Right ventricle myocardium inferior (tissue), 1 donor: ENCODE measurements at regions of chr22 and their contacts with region 1.

Region 1: GRCh38 chr22:49701380-49702067 is 126.1 kb downstream of the BRD1 start:
- DNase-seq: no peak
- ATAC-seq: no peak

Region 2: DNA sequence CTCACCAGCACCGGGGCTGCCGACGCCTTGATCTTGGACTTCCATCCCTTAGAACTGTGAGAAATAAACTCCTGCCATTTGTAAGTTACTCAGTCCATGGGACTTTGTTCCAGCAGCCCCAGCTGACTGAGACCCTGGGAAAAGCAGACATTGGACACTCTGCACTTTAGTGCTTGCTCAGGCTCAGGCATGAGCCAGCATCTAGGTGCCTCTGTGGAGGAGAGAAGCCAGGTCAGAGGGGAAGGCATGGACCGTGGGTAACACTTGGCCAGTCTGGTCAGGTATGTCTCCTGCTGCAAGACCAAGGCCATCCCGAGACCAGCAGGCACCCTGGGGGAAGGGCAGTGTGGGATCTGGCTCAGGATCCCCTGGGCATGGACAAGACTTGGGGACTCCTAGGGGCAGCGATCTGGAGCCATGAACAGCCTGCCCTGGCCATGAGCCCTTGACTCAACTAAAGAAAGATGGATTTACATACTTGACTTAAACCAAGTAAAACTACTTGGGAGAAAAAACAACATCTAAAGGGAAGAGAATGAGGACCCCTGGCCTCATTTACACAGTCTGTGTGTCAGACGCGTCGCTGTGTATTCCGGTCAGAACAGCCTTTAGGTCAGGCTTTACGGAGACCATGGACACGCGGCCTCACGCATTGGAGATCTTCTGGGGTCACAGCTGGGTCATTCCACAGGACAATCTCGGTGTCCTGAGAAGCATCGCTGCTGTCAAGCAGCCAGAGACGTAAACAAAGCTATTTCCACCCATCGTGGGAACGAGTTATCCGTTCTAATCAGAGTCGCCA is 370.9 kb before region 1 on chr22:
- intact Hi-C with region 1: loop called (anchors 10 kb)
- DNase-seq: peak; percentile 22
- ATAC-seq: no peak